ENCODE measurements at regions of chrX and their contacts with region 1.

Region 1: GRCh38 chrX:130120746-130121504 is 10.6 kb upstream of the ELF4 start:
- DNase-seq: no peak
- H3K4me3 ChIP-seq: peak overlapping the region; percentile 29
- H3K27me3 ChIP-seq: no peaks in the 10 kb centered on the region
- CTCF ChIP-seq: peak; percentile 36

Region 2: DNA sequence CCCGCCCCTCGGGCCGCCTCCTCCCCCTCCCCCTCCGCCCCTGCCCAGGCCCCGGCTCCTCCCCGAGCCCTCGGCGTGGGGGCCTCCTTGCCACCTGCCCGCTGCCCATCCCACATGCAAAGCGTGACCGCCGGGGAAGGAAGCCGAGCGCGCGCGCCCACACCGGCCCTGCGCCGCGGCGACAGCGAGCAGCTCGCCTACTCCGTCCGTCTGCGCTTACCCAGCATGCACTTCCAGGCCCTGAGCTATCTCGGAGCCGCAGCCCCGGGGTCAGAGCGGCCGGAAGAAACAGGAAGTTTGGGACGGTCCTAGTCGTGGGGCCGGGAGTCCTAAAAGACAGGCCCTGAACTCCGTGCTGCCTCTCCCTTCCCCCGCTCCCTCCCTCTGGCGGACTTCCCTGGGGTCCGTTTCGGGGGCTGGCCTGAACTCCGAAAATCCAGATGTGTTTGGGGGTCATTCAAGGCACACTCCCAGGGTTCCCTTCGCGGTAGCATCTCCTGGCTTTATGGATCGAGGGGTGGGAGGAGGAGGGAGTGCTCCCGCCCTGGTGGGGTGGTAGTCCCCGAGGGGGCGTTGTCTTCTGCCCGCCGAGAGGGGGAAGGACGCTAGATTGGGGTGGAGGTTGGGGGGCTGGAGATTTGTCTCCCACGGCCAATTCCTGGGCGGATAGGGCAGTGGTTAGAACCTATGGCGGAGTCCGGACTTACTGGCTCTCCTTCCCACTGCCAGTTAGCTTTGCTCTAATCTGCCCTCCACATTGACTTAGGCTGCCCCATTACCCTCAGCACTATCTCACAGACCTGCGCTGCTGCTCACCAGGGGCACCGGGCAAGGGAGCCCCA is 163.5 kb before region 1 on chrX:
- CTCF ChIA-PET with region 1: no interaction called
- POLR2A ChIA-PET with region 1: no interaction called
- DNase-seq: no peak
- H3K4me3 ChIP-seq: peak overlapping the region; percentile 31
- H3K27me3 ChIP-seq: no peaks in the 10 kb centered on the region
- CTCF ChIP-seq: no peak

Region 3: GRCh38 chrX:130079824-130080406 is 41.0 kb before region 1 on chrX:
- CTCF ChIA-PET with region 1: interaction called, 14 read pairs
- POLR2A ChIA-PET with region 1: no interaction called
- DNase-seq: peak; percentile 19
- H3K4me3 ChIP-seq: no peak overlapping the region
- H3K27me3 ChIP-seq: no peaks in the 10 kb centered on the region
- CTCF ChIP-seq: peak; percentile 68

Region 4: GRCh38 chrX:130086447-130087206 is 34.3 kb before region 1 on chrX:
- CTCF ChIA-PET with region 1: interaction called, 13 read pairs
- POLR2A ChIA-PET with region 1: no interaction called
- DNase-seq: no peak
- H3K4me3 ChIP-seq: no peak overlapping the region
- H3K27me3 ChIP-seq: no peaks in the 10 kb centered on the region
- CTCF ChIP-seq: no peak

Region 5: DNA sequence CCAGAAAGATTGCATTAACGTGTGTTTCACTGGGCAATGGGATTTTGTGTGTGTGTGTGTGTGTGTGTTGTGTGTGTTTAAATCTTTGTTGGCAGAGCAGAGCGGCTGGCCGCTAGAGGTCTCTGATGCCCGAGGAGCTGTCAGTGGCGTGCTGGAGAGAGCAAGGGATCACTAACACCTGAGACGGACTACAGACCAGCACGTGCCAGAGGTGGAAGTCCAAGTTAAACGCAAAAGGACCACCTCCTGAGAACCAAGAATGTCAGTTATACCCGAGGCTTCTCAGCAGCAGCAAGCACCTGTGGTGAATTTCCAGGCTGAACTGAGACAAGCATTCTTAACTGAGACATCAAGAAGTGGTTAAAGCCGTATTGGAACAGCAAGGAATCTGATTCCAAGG is 209.8 kb after region 1 on chrX:
- CTCF ChIA-PET with region 1: no interaction called
- POLR2A ChIA-PET with region 1: no interaction called
- DNase-seq: no peak
- H3K4me3 ChIP-seq: no peak overlapping the region
- H3K27me3 ChIP-seq: no peaks in the 10 kb centered on the region
- CTCF ChIP-seq: peak; percentile 60